ENCODE measurements at regions of chr5 and their contacts with region 1.

Region 1: DNA sequence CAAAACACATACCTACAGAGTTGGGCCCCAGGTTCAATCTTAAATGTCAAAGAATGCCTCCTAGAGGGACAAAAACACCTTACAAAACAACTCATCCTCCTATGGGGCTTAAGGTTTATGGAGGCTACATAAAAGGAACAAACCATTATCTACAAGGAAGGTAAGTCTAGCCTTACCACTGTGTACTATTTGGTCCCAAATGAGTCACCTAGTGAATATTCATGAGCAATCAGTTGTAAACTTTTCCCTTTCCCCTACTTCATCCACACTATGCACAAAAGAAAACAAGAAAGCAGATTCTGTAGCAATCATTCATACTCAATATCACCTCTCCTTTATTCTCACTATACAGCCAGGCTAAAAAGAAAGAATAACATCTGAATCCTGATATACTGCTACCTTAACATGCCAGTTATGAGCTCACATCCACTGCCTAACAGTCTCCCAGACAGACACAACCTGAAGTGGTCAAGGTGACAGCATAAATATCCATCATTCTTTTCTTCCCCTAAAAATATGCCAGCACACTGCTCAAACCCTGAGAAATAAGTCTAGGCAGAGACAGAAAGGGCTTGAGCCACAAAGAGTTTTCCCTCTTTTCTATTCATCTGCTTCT is 6.2 kb downstream of the OXCT1 start:
- DNase-seq: no peak
- ATAC-seq: no peak

Region 2: GRCh38 chr5:42889311-42889933 is 1025.4 kb after region 1 on chr5:
- intact Hi-C with region 1: loop called (anchors 5 kb)
- DNase-seq: no peak
- ATAC-seq: peak; percentile 88

Measured in Right ventricle myocardium inferior (tissue), 1 donor.